CD4-positive, alpha-beta T cell (primary cell): ENCODE measurements at regions of chr12 and their contacts with region 1.

Region 1: DNA sequence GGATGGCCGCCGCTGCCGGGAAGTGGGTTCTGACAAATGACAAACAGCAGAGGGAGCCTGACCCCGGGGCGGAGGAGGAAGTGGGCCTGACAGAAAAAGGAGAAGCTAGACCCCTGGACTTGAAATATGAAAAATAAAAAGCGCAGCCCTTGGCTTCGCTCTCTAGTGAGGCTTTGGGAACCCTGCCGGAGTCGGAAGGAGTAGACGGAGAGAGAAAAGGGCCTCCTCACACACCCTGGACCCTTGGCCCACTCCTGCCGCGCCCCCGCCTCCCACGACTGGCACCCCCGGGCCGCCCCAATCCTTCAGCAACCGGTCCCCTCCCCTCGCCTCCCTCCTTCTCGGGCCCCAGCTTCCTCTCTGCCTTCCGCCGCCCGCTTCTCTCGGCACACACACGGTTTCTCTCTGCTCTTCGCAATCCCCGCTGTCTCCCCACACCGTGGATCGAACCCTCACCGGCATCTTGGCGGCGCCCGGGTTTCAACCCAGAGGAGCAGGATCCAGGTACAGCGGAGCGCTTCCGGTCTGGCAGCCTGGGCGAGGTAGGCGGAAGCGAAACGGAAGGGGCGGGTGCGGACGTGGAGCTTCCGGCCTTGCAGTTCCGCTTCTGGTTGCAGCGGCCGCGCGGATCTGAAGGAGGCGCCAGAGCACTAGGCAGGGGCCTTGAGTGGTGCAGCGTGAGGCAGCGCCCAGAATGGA is at the start of gene ARPC3:
- DNase-seq: peak; percentile 90 to 98 (median 94)
- ATAC-seq: peak; percentile 95
- H3K4me3 ChIP-seq: peak within 1 kb of the TSS; percentile 84
- H3K4me3 Mint-ChIP-seq: peak within 1 kb of the TSS; percentile 100
- H3K27ac ChIP-seq: peak within 1 kb of the TSS; percentile 92 to 94
- H3K27ac Mint-ChIP-seq: peak within 1 kb of the TSS; percentile 96
- H3K4me1 ChIP-seq: peaks cover 41% of the 10 kb centered on the region
- H3K4me1 Mint-ChIP-seq: peaks cover 47% of the 10 kb centered on the region
- H3K27me3 ChIP-seq: no peaks in the 10 kb centered on the region
- H3K27me3 Mint-ChIP-seq: no peaks in the 10 kb centered on the region
- CTCF ChIP-seq: peak; percentile 81
- total RNA-seq, gene ARPC3: 120 to 124 TPM

Region 2: GRCh38 chr12:110431957-110432587 is 17.9 kb before region 1 on chr12:
- CTCF ChIA-PET with region 1: interaction called, 56 read pairs
- POLR2A ChIA-PET with region 1: interaction called, 43 read pairs
- intact Hi-C with region 1: no loop called
- DNase-seq: no peak
- ATAC-seq: no peak
- H3K4me3 ChIP-seq: peak overlapping the region; percentile 55
- H3K4me3 Mint-ChIP-seq: no peak overlapping the region
- H3K27ac ChIP-seq: no peak overlapping the region
- H3K27ac Mint-ChIP-seq: peak overlapping the region; percentile 96
- H3K4me1 ChIP-seq: peaks cover 2% of the 10 kb centered on the region
- H3K4me1 Mint-ChIP-seq: peaks cover 6% of the 10 kb centered on the region
- H3K27me3 ChIP-seq: no peaks in the 10 kb centered on the region
- H3K27me3 Mint-ChIP-seq: no peaks in the 10 kb centered on the region
- CTCF ChIP-seq: no peak

Region 3: GRCh38 chr12:110513842-110514241 is 63.9 kb after region 1 on chr12:
- CTCF ChIA-PET with region 1: interaction called, 17 read pairs
- POLR2A ChIA-PET with region 1: interaction called, 3 read pairs
- intact Hi-C with region 1: loop called in 1 of 2 experiments (anchors 2 kb)
- DNase-seq: no peak
- ATAC-seq: no peak
- H3K4me3 ChIP-seq: no peak overlapping the region
- H3K4me3 Mint-ChIP-seq: no peak overlapping the region
- H3K27ac ChIP-seq: no peak overlapping the region
- H3K27ac Mint-ChIP-seq: no peak overlapping the region
- H3K4me1 ChIP-seq: no peaks in the 10 kb centered on the region
- H3K4me1 Mint-ChIP-seq: no peaks in the 10 kb centered on the region
- H3K27me3 ChIP-seq: no peaks in the 10 kb centered on the region
- H3K27me3 Mint-ChIP-seq: no peaks in the 10 kb centered on the region
- CTCF ChIP-seq: no peak

Region 4: DNA sequence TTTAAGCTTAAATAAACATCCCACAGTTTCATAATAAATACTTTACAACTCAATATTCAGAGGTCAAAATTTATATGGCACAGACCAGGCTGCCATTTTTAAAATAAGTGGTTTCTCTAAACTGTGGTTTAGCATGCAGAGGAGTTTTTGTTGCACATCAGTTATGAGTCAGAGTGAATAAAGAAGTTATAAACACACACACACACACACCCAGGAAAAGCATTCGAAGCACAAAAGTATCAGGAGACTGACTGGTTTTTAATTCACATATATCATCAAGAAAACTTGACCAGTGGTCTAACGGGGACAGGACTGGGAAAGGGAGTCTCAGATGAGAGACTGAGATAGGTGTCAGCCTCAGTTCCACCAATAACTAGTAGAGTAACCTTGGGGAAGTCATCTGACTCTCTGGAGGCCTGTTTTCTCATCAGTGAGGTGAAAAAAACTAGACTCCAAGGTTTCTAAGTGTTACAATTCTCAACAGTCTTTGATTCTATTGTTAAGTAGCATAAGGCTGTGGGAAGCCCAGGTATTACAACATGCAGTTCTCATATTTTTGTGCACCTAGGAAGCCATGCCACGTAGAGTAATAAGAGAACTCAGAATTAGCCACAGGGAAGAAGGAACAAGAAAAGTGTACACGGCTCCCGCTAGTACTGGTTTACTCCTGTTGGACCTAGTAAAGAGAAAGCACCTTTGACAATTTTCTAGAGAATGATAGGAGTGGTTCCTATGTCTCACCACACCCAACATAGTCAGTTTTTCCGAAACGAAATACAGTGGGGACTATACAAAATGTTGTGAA is 128.0 kb after region 1 on chr12:
- CTCF ChIA-PET with region 1: interaction called, 15 read pairs
- POLR2A ChIA-PET with region 1: interaction called, 4 read pairs
- intact Hi-C with region 1: no loop called
- DNase-seq: peak in 6 of 14 experiments; percentile 19 to 83 (median 52)
- ATAC-seq: peak; percentile 27
- H3K4me3 ChIP-seq: peak overlapping the region; percentile 13
- H3K4me3 Mint-ChIP-seq: peak overlapping the region; percentile 96
- H3K27ac ChIP-seq: peak overlapping the region; percentile 67 to 79
- H3K27ac Mint-ChIP-seq: peak overlapping the region; percentile 92
- H3K4me1 ChIP-seq: peaks cover 51% of the 10 kb centered on the region
- H3K4me1 Mint-ChIP-seq: peaks cover 80% of the 10 kb centered on the region
- H3K27me3 ChIP-seq: no peaks in the 10 kb centered on the region
- H3K27me3 Mint-ChIP-seq: no peaks in the 10 kb centered on the region
- CTCF ChIP-seq: no peak

Region 5: DNA sequence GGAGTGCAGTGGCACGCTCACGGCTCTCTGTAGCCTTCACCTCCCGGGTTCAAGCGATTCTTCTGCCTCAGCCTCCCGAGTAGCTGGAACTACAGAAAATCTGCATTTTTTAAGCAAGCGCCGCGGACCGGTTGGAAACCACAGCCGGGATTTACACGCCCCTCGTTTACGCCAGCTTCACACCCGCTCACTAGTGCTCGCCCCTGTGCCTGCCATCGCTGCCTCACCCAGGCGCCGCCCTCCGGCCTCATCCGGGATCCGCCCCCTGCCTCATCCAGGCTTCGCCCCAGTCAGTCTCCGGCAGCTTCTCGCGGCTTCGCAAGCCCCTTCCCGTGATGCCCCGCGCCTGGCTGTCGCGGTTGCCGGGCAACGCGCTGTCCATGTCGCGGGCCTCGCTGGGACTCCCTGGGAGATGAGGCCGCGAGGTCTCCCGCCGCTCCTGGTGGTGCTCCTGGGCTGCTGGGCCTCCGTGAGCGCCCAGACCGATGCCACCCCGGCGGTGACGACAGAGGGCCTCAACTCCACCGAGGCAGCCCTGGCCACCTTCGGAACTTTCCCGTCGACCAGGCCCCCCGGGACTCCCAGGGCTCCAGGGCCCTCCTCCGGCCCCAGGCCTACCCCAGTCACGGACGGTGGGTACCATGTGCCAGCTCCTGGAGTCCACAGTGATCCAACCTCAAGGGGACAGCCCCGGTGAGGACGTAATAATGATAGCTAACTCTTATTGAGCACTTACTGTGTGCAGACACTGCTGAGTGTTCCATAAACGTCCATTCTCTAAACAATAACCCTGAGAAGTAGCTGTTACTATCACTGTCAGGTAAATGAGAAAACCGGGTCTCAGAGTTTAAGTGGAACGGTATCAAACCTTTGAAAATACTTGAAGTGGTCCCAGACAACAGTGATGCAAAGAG is 164.1 kb after region 1 on chr12 and contains the start of gene TCTN1:
- CTCF ChIA-PET with region 1: interaction called, 16 read pairs
- POLR2A ChIA-PET with region 1: interaction called, 6 read pairs
- intact Hi-C with region 1: no loop called
- DNase-seq: peak; percentile 91 to 98 (median 96)
- ATAC-seq: peak; percentile 99
- H3K4me3 ChIP-seq: peak within 1 kb of the TSS; percentile 73
- H3K4me3 Mint-ChIP-seq: peak within 1 kb of the TSS; percentile 89
- H3K27ac ChIP-seq: peak within 1 kb of the TSS; percentile 61 to 68
- H3K27ac Mint-ChIP-seq: peak within 1 kb of the TSS; percentile 83
- H3K4me1 ChIP-seq: peaks cover 17% of the 10 kb centered on the region
- H3K4me1 Mint-ChIP-seq: peaks cover 4% of the 10 kb centered on the region
- H3K27me3 ChIP-seq: no peaks in the 10 kb centered on the region
- H3K27me3 Mint-ChIP-seq: no peaks in the 10 kb centered on the region
- CTCF ChIP-seq: no peak
- total RNA-seq, gene TCTN1: 5.0 to 5.5 TPM

Region 6: GRCh38 chr12:110888256-110888991 is 438.5 kb after region 1 on chr12:
- CTCF ChIA-PET with region 1: interaction called, 5 read pairs
- POLR2A ChIA-PET with region 1: interaction called, 7 read pairs
- intact Hi-C with region 1: loop called (anchors 1 to 5 kb)
- DNase-seq: no peak
- ATAC-seq: no peak
- H3K4me3 ChIP-seq: peak overlapping the region; percentile 71
- H3K4me3 Mint-ChIP-seq: peak overlapping the region; percentile 89
- H3K27ac ChIP-seq: no peak overlapping the region
- H3K27ac Mint-ChIP-seq: no peak overlapping the region
- H3K4me1 ChIP-seq: peaks cover 11% of the 10 kb centered on the region
- H3K4me1 Mint-ChIP-seq: peaks cover 3% of the 10 kb centered on the region
- H3K27me3 ChIP-seq: no peaks in the 10 kb centered on the region
- H3K27me3 Mint-ChIP-seq: no peaks in the 10 kb centered on the region
- CTCF ChIP-seq: peak; percentile 54